ENCODE measurements at regions of chr7 and their contacts with region 1.

Region 1: DNA sequence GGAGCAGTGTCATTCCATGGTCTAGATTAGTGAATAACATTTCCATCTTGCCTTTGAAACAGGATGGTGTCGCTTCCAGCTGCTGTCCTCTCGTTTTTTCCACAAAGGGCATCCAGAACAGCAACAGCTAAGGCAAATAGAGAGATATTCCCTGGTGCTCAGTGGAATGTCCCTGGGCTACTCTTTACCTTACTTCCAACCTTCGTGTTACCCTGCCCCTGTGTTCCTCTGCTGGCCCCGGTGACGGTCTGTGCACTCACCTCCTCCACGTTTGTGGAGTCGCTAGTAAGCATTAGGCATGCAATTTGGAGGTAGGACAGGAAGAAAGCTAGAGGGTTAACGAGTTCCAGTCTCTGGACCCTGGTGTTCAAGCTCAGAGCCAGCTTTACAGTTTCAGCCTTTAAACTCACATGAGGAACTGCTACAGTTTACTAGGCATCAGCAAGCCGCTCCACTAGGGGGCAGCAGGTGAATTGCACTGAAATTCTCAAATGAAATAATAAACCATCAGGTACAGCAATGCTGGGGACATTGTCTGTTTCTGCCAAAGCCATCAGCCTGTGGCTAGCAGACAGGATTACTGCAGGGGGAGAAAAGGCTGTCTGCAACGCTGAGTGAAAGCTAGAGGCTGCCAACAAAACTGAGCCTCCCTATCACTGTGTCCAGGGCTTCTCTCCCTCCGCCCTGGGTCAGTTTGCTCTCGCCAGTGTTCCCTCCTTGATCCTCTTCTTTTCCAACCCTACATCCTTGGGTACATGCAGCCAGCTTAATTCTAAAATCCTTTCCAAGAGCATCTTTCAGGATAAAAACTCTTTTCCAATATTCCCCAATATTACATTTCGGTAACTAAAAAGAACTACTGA is 9.0 kb downstream of the MRPL32 start:
- DNase-seq: peak; percentile 69
- H3K4me3 ChIP-seq: no peak overlapping the region
- H3K27ac ChIP-seq: no peak overlapping the region
- H3K4me1 ChIP-seq: no peaks in the 10 kb centered on the region
- H3K27me3 ChIP-seq: no peaks in the 10 kb centered on the region
- CTCF ChIP-seq: peak; percentile 82 to 84
- POLR2A ChIP-seq: no peak

Region 2: DNA sequence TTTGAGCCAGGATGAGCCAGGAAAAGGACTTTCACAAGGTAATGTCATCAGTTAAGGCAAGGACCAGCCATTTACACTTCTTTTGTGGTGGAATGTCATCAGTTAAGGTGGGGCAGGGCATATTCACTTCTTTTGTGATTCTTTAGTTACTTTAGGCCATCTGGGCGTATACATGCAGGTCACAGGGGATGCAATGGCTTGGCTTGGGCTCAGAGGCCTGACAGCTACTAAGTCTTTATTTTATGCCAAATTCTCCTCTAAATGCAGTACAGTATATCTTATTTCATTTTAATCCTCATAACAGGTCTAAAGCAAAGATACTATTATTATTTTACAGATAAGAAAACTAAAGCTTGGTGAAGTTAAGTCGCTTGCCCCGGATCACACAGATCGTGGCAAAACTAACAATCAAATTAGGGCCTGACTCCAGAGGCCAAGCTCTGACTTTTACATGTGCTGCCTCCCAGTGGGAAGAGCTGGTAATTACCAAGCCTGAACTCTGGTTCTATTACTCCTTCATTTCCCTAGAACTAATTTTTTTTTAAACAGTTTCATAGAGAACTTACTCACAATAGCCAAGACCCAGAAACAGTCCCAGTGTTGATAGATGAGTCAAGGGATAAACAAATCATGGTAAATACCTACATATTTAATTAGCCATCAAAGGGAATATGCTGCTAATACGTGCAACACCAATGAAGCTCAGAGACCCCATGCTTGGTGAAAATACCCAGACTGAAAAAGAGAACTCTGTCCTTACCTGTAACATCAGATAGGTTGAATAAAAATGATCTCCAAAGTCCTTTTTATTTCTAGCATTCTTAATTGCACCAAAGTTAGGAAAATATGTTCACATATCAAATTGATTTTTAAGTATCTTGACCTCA is 64.8 kb before region 1 on chr7:
- CTCF ChIA-PET with region 1: no interaction called
- POLR2A ChIA-PET with region 1: no interaction called
- dilution Hi-C with region 1: no loop called
- intact Hi-C with region 1: no loop called
- DNase-seq: peak; percentile 67
- H3K4me3 ChIP-seq: no peak overlapping the region
- H3K27ac ChIP-seq: no peak overlapping the region
- H3K4me1 ChIP-seq: no peaks in the 10 kb centered on the region
- H3K27me3 ChIP-seq: peaks cover 3 to 6% of the 10 kb centered on the region in 2 experiments
- CTCF ChIP-seq: peak; percentile 60 to 68
- POLR2A ChIP-seq: no peak

Region 3: DNA sequence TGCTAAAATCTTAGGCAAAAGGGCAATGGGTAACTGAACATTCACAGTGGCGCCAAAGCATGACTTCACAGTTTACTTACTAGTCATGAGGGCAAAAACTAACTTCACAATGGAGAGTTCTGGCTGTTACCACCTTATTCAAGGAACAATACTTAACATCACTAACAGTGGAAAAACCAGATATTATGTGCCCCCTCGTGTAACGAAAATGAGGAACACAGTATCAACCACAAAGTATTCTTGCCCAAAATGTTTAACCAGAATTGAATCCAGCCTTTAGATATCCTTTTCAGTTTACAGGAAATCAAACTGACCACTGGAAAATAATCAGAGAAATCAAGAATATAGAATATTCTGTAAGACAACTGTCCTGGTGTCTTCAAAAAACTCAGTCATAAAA is 38.9 kb before region 1 on chr7:
- CTCF ChIA-PET with region 1: no interaction called
- POLR2A ChIA-PET with region 1: no interaction called
- dilution Hi-C with region 1: no loop called
- intact Hi-C with region 1: no loop called
- DNase-seq: no peak
- H3K4me3 ChIP-seq: no peak overlapping the region
- H3K27ac ChIP-seq: no peak overlapping the region
- H3K4me1 ChIP-seq: no peaks in the 10 kb centered on the region
- H3K27me3 ChIP-seq: peaks cover 0 to 6% of the 10 kb centered on the region in 2 experiments
- CTCF ChIP-seq: no peak
- POLR2A ChIP-seq: no peak

Region 4: GRCh38 chr7:42960762-42961161 is 19.5 kb after region 1 on chr7:
- CTCF ChIA-PET with region 1: interaction called, 10 read pairs
- POLR2A ChIA-PET with region 1: no interaction called
- dilution Hi-C with region 1: no loop called
- intact Hi-C with region 1: no loop called
- DNase-seq: no peak
- H3K4me3 ChIP-seq: no peak overlapping the region
- H3K27ac ChIP-seq: no peak overlapping the region
- H3K4me1 ChIP-seq: no peaks in the 10 kb centered on the region
- H3K27me3 ChIP-seq: peaks cover 0 to 4% of the 10 kb centered on the region in 2 experiments
- CTCF ChIP-seq: no peak
- POLR2A ChIP-seq: no peak

Region 5: GRCh38 chr7:43044511-43044910 is 103.3 kb after region 1 on chr7:
- CTCF ChIA-PET with region 1: no interaction called
- POLR2A ChIA-PET with region 1: no interaction called
- dilution Hi-C with region 1: no loop called
- intact Hi-C with region 1: no loop called
- DNase-seq: no peak
- H3K4me3 ChIP-seq: no peak overlapping the region
- H3K27ac ChIP-seq: no peak overlapping the region
- H3K4me1 ChIP-seq: no peaks in the 10 kb centered on the region
- H3K27me3 ChIP-seq: no peaks in the 10 kb centered on the region
- CTCF ChIP-seq: no peak
- POLR2A ChIP-seq: no peak

Region 6: DNA sequence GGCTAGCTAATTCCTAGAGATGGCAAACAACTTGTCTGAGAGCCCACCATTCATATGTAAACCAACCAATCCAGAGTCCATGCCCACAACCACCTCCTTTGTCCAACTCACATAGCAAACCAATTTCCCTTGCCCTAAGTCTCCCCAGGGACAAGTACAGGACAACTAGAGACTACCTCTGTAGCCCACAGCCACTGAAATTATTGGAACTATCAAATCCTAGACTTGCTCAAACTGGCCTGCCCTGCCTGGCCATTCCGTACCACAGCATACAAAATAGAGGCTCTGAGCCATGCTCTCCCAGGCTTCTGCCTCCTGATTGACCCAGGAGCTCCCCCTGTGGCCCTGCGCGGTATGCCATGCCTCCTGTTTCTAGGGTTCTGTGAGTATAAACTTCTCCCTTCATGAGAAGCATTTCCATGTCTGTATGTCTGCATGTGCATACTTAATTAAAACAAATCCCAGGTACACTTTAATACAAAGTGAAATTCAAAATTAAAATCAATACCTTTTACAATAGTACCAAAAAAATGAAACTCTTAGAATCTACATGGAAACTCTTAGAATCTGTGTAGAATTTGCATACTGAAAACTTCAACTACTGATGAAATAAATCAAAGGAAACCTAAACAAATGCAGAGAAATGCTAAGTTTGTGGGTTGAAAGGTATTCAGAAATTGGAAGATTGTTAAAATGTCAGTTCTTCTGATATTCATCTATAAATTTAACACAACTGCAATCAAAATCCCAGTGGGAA is 167.2 kb after region 1 on chr7:
- CTCF ChIA-PET with region 1: interaction called, 20 read pairs
- POLR2A ChIA-PET with region 1: no interaction called
- dilution Hi-C with region 1: no loop called
- intact Hi-C with region 1: loop called (anchors 1 kb)
- DNase-seq: peak; percentile 58
- H3K4me3 ChIP-seq: no peak overlapping the region
- H3K27ac ChIP-seq: no peak overlapping the region
- H3K4me1 ChIP-seq: no peaks in the 10 kb centered on the region
- H3K27me3 ChIP-seq: peaks cover 30 to 42% of the 10 kb centered on the region in 2 experiments
- CTCF ChIP-seq: peak; percentile 71 to 86
- POLR2A ChIP-seq: no peak

Region 7: GRCh38 chr7:43260980-43261878 is 320.0 kb after region 1 on chr7:
- CTCF ChIA-PET with region 1: interaction called, 68 read pairs
- POLR2A ChIA-PET with region 1: no interaction called
- dilution Hi-C with region 1: no loop called
- intact Hi-C with region 1: loop called (anchors 1 kb)
- DNase-seq: peak; percentile 70
- H3K4me3 ChIP-seq: no peak overlapping the region
- H3K27ac ChIP-seq: no peak overlapping the region
- H3K4me1 ChIP-seq: no peaks in the 10 kb centered on the region
- H3K27me3 ChIP-seq: peaks cover 3 to 7% of the 10 kb centered on the region in 2 experiments
- CTCF ChIP-seq: peak; percentile 90 to 91
- POLR2A ChIP-seq: no peak

Region 8: DNA sequence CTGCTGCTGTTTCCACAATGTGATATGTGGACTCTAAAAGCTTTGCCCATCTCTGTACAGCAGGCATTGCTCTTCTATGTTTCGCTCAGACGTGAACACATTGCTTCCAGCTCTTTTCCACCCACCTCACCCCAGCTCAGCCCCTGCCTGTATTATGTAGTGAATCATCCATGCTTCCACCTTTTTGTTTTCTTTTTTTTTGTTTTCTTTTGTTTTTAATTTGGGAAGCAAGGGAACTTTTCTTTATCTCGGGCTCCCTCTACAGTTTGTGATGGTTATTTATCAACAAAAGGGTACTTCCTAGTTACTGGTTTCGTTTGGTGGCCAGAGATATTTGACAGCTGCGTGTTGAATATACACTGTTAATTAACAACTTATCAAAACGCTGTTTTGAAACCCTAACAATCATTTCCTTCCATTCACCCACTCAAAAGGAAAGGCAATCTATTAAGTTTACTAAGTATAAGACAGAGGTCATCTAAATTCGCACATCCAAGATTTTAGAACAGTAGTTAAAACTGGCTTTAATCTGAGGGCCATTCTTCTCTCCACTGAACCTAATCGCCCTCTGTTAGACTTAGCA is 513.8 kb after region 1 on chr7:
- CTCF ChIA-PET with region 1: interaction called, 3 read pairs
- POLR2A ChIA-PET with region 1: no interaction called
- dilution Hi-C with region 1: no loop called
- intact Hi-C with region 1: loop called (anchors 2 kb)
- DNase-seq: peak; percentile 68
- H3K4me3 ChIP-seq: peak overlapping the region in 1 of 3 experiments; percentile 39
- H3K27ac ChIP-seq: no peak overlapping the region
- H3K4me1 ChIP-seq: peaks cover 3% of the 10 kb centered on the region
- H3K27me3 ChIP-seq: peaks cover 9 to 29% of the 10 kb centered on the region in 2 experiments
- CTCF ChIP-seq: peak; percentile 30 to 50
- POLR2A ChIP-seq: no peak

Region 9: GRCh38 chr7:43834463-43835251 is 893.4 kb after region 1 on chr7:
- CTCF ChIA-PET with region 1: interaction called, 5 read pairs
- POLR2A ChIA-PET with region 1: no interaction called
- dilution Hi-C with region 1: no loop called
- intact Hi-C with region 1: loop called (anchors 10 kb)
- DNase-seq: peak; percentile 22
- H3K4me3 ChIP-seq: no peak overlapping the region
- H3K27ac ChIP-seq: no peak overlapping the region
- H3K4me1 ChIP-seq: no peaks in the 10 kb centered on the region
- H3K27me3 ChIP-seq: peaks cover 0 to 3% of the 10 kb centered on the region in 2 experiments
- CTCF ChIP-seq: no peak
- POLR2A ChIP-seq: no peak

Region 10: DNA sequence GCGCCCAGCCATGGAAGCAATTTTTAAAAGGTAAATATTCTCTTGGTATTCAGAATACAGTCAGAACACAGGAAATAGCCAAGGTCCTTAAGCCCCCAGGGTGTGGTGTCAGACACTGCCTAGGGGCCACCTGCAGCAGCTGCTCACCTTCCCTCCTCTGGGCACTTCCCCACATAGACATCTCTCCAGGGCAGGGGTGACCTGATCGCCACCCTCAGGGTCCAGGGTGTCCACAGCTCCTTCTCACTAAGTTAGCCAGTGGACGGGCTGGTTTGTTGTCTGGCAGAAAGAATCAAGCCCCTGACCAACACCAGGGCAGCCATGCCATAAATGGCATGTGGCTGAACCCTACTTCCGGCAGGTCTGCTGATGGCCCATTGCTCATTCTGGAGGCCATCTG is 949.3 kb after region 1 on chr7:
- CTCF ChIA-PET with region 1: no interaction called
- POLR2A ChIA-PET with region 1: no interaction called
- dilution Hi-C with region 1: no loop called
- intact Hi-C with region 1: no loop called
- DNase-seq: no peak
- H3K4me3 ChIP-seq: no peak overlapping the region
- H3K27ac ChIP-seq: no peak overlapping the region
- H3K4me1 ChIP-seq: peaks cover 6% of the 10 kb centered on the region
- H3K27me3 ChIP-seq: no peaks in the 10 kb centered on the region
- CTCF ChIP-seq: no peak
- POLR2A ChIP-seq: no peak

Measured in endothelial cell of umbilical vein (primary cell).